IMR-90 (cell line): ENCODE measurements at regions of chr21 and their contacts with region 1.

Region 1: GRCh38 chr21:45064618-45065399 is 9.6 kb upstream of the ADARB1 start:
- DNase-seq: no peak
- ATAC-seq: peak; percentile 59
- H3K4me3 ChIP-seq: no peak overlapping the region
- H3K27ac ChIP-seq: no peak overlapping the region
- H3K4me1 ChIP-seq: peaks cover 9% of the 10 kb centered on the region
- H3K27me3 ChIP-seq: no peaks in the 10 kb centered on the region
- CTCF ChIP-seq: no peak
- POLR2A ChIP-seq: no peak
- RAD21 ChIP-seq: no peak

Region 2: GRCh38 chr21:45050786-45051489 is 13.9 kb before region 1 on chr21:
- CTCF ChIA-PET with region 1: no interaction called
- POLR2A ChIA-PET with region 1: interaction called, 20 read pairs
- dilution Hi-C with region 1: no loop called
- in situ Hi-C with region 1: no loop called
- intact Hi-C with region 1: no loop called
- DNase-seq: peak; percentile 100
- ATAC-seq: peak; percentile 82
- H3K4me3 ChIP-seq: no peak overlapping the region
- H3K27ac ChIP-seq: peak overlapping the region; percentile 99
- H3K4me1 ChIP-seq: peaks cover 38% of the 10 kb centered on the region
- H3K27me3 ChIP-seq: no peaks in the 10 kb centered on the region
- CTCF ChIP-seq: no peak
- POLR2A ChIP-seq: 0 out of 2 replicates have a peak, but pooled peaks have one; percentile 3
- RAD21 ChIP-seq: no peak